ENCODE measurements at regions of chr2 and their contacts with region 1.

Region 1: DNA sequence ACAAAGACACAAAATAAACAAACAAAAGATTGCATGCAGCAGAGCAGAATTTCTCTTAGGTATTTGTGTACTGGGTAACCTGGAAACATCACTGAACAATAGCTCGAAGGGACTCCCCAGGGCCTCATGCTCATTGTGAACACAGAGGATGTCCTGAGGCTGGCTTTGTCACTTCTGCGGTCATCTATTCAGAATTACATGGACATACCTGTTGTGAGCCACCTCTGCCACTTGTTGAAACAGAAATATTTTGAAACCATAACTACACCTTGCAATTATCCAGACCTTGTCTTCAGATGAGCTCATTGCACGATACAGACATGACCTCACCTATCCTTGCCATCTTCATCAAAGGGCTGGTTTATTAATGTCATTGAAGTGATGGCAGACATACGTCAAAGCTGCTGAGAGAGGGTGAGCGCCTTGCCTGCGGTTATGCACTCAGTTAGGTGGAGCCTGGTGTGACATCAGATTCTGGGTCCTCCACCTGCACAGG is 23.5 kb upstream of the CREG2 start:
- DNase-seq: peak; percentile 82 to 99
- H3K4me3 ChIP-seq: no peak overlapping the region
- H3K27ac ChIP-seq: peak overlapping the region; percentile 62
- H3K4me1 ChIP-seq: peaks cover 32% of the 10 kb centered on the region
- H3K27me3 ChIP-seq: no peaks in the 10 kb centered on the region
- CTCF ChIP-seq: no peak

Region 2: DNA sequence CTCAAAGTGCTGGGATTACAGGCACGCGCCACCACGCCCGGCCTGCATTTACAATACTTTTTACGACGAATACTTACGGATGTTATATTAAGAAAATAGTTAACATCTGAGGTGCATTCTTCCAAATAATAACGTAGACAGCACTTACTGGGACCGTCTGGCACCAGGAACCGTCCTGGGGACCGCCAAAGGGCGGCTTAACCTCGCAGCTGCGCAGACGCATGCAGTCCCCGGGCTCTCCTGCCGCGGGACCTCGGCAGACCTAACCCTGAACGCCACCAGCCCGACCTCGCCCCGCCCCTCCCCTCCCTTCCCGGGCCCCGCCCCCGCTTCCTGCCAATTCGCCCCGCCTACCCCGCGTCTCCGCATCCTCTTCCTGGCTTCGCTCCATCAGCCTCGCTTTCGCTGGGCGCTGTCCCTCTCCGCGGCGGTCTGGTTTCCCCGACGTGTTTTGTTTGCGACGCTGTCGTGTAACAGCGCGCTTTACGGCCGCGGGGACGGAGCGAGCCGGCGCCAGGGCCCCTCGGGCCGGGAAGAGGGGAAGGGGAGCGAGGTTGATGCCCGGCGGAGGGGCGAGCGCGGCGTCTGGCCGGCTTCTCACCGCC is 158.3 kb before region 1 on chr2 and contains the start of gene CNOT11:
- CTCF ChIA-PET with region 1: no interaction called
- POLR2A ChIA-PET with region 1: no interaction called
- intact Hi-C with region 1: loop called (anchors 1 kb)
- DNase-seq: peak; percentile 91 to 97
- H3K4me3 ChIP-seq: peak within 1 kb of the TSS; percentile 66
- H3K27ac ChIP-seq: peak within 1 kb of the TSS; percentile 71
- H3K4me1 ChIP-seq: peaks cover 33% of the 10 kb centered on the region
- H3K27me3 ChIP-seq: no peaks in the 10 kb centered on the region
- CTCF ChIP-seq: no peak
- total RNA-seq, gene CNOT11: 39.0 and 60.6 TPM in 2 replicates

Region 3: DNA sequence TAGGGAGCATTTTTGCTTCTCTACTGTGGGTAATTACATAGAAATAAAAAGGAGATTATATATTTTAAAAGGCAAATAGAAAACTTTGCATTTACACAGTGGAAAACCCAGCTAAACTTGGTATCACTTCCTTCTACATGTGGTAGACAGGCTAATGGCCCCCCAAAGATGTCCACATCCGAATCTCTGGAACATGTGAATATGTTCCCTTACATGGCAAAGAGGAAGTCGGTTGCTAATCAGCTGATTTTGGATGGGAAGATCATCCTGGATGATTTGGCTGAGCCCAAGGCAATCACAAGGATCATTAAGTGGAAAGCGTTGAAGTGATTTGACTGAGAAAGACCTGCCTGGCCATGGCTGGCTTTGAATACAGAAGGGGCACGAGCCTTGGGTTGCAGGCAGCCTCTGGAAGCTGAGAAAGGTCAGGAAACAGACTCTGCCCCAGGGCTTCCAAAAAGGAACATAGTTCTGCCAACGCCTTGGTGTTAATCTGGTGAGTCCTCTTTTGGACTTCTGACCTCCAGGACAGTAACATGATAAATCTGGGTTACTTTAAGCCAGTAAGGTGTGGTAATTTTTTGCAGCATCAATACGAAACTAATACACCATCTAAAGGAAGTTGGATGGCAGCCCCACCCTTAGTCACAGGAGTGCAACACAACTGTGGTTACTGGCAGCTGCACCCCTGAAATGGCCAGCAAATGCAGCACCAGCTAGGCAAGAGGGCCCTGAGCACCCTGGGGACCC is 49.5 kb before region 1 on chr2:
- CTCF ChIA-PET with region 1: no interaction called
- POLR2A ChIA-PET with region 1: no interaction called
- intact Hi-C with region 1: loop called (anchors 1 kb)
- DNase-seq: peak in 1 of 2 experiments; percentile 52
- H3K4me3 ChIP-seq: no peak overlapping the region
- H3K27ac ChIP-seq: peak overlapping the region; percentile 88
- H3K4me1 ChIP-seq: peaks cover 60% of the 10 kb centered on the region
- H3K27me3 ChIP-seq: no peaks in the 10 kb centered on the region
- CTCF ChIP-seq: no peak

Region 4: DNA sequence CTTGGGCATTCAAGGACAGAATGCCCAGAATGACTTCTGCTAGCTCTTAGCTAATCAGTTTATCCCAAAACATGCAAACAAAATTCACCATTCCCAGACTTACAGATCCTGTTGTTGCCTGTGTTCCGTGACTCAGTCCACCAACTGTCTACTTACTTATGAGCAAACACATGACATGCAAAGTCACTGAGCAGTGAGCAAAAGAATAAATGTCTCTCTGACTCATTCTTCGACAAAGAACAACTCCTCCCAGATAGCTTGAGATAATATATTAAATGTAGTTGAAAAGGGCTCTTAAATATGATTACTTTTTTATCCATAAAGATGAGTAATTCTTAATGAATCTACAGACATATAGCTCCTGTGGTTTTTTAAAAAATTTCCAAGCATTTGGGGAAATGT is 14.4 kb before region 1 on chr2:
- CTCF ChIA-PET with region 1: interaction called, 3 read pairs
- POLR2A ChIA-PET with region 1: interaction called, 11 read pairs
- intact Hi-C with region 1: loop called (anchors 2 kb)
- DNase-seq: peak; percentile 29 to 88
- H3K4me3 ChIP-seq: peak overlapping the region; percentile 31; the same call in 1 of the 2 replicates
- H3K27ac ChIP-seq: peak overlapping the region; percentile 80
- H3K4me1 ChIP-seq: peaks cover 39% of the 10 kb centered on the region
- H3K27me3 ChIP-seq: no peaks in the 10 kb centered on the region
- CTCF ChIP-seq: no peak

Region 5: DNA sequence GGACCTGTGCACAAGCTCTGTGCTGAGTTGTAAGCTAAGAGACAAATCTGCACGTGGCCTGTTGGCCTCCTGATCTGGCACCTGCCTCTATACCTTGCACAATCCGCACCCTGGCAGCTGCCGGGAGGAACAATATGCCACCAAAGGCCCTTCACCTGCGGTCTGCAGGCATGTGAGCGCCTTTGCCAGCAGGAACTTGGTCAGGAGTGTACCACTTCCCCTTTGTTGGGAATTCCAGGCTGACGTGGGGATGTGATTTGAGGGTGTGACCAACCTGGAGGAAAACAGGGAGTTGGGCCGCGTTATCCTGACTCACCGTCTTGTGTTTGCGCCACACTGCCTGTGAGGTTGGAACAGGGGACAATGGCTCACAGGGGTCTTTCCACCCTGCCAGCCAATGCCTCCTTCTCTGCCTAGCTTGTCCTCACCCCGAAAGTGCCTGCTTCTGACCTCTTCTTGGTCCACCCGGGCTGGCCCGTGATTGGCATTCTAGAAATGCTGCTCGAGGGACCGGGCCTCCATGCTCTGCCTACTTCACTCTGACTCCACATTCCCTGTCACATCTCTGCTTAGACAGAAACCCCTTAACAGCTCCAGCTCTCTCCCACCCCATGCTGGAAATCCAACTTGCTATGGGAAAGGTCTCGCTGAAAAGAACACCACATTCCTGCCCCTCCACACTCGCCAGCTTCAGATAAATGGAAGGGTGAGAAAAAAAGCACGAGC is 219.6 kb after region 1 on chr2:
- CTCF ChIA-PET with region 1: no interaction called
- POLR2A ChIA-PET with region 1: no interaction called
- intact Hi-C with region 1: loop called (anchors 1 kb)
- DNase-seq: peak; percentile 91 to 98
- H3K4me3 ChIP-seq: no peak overlapping the region
- H3K27ac ChIP-seq: peak overlapping the region; percentile 94
- H3K4me1 ChIP-seq: peaks cover 42% of the 10 kb centered on the region
- H3K27me3 ChIP-seq: no peaks in the 10 kb centered on the region
- CTCF ChIP-seq: no peak

Measured in PC-9 (cell line).